Caco-2 (cell line): ENCODE measurements at regions of chr2 and their contacts with region 1.

Region 1: DNA sequence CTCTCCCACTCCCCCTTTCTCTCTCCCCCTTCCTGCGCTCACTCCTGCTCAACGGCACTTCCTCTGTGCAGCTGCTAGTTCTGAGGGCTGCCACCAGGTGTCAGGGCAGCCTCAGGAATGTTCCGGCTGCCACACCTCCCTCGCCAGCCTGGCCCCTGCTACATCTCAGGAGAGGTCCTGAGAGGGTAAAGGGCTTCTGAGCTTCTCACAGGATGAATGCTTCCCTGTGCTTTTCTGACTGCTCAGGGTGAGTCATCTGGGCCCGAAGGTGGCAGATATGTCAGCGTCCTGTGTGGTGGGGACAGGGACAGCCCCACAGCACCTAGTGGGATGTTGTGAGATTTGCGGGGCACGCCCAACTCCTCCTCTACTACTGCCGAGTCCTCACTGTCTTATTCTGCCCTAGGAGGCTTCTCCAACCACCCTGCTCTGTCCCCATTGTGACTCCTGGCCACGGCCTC is 49.0 kb downstream of the PLEKHB2 start:
- DNase-seq: peak; percentile 78 to 81
- H3K4me3 ChIP-seq: no peak overlapping the region
- H3K4me3 Mint-ChIP-seq: no peak overlapping the region
- H3K27ac Mint-ChIP-seq: no peak overlapping the region
- H3K4me1 ChIP-seq: no peaks in the 10 kb centered on the region
- H3K4me1 Mint-ChIP-seq: peaks cover 12% of the 10 kb centered on the region
- H3K27me3 ChIP-seq: no peaks in the 10 kb centered on the region
- H3K27me3 Mint-ChIP-seq: no peaks in the 10 kb centered on the region
- CTCF ChIP-seq: peak; percentile 91 to 93

Region 2: GRCh38 chr2:131413148-131413747 is 259.1 kb after region 1 on chr2:
- CTCF ChIA-PET with region 1: interaction called, 3 read pairs
- POLR2A ChIA-PET with region 1: no interaction called
- intact Hi-C with region 1: loop called (anchors 1 kb)
- DNase-seq: peak in 1 of 2 experiments; percentile 67
- H3K4me3 ChIP-seq: no peak overlapping the region
- H3K4me3 Mint-ChIP-seq: no peak overlapping the region
- H3K27ac Mint-ChIP-seq: no peak overlapping the region
- H3K4me1 ChIP-seq: no peaks in the 10 kb centered on the region
- H3K4me1 Mint-ChIP-seq: no peaks in the 10 kb centered on the region
- H3K27me3 ChIP-seq: no peaks in the 10 kb centered on the region
- H3K27me3 Mint-ChIP-seq: peaks cover 18% of the 10 kb centered on the region
- CTCF ChIP-seq: peak; percentile 71 to 82

Region 3: GRCh38 chr2:131492418-131493198 is 338.5 kb after region 1 on chr2:
- CTCF ChIA-PET with region 1: interaction called, 5 read pairs
- POLR2A ChIA-PET with region 1: no interaction called
- intact Hi-C with region 1: loop called (anchors 5 kb)
- DNase-seq: peak; percentile 97 to 98
- H3K4me3 ChIP-seq: peak overlapping the region; percentile 96
- H3K4me3 Mint-ChIP-seq: peak overlapping the region; percentile 95
- H3K27ac Mint-ChIP-seq: peak overlapping the region; percentile 98
- H3K4me1 ChIP-seq: no peaks in the 10 kb centered on the region
- H3K4me1 Mint-ChIP-seq: no peaks in the 10 kb centered on the region
- H3K27me3 ChIP-seq: no peaks in the 10 kb centered on the region
- H3K27me3 Mint-ChIP-seq: no peaks in the 10 kb centered on the region
- CTCF ChIP-seq: peak; percentile 90 to 91

Region 4: GRCh38 chr2:131521961-131522794 is 368.1 kb after region 1 on chr2:
- CTCF ChIA-PET with region 1: no interaction called
- POLR2A ChIA-PET with region 1: no interaction called
- intact Hi-C with region 1: loop called (anchors 10 kb)
- DNase-seq: no peak
- H3K4me3 ChIP-seq: no peak overlapping the region
- H3K4me3 Mint-ChIP-seq: no peak overlapping the region
- H3K27ac Mint-ChIP-seq: no peak overlapping the region
- H3K4me1 ChIP-seq: no peaks in the 10 kb centered on the region
- H3K4me1 Mint-ChIP-seq: no peaks in the 10 kb centered on the region
- H3K27me3 ChIP-seq: no peaks in the 10 kb centered on the region
- H3K27me3 Mint-ChIP-seq: no peaks in the 10 kb centered on the region
- CTCF ChIP-seq: no peak

Region 5: DNA sequence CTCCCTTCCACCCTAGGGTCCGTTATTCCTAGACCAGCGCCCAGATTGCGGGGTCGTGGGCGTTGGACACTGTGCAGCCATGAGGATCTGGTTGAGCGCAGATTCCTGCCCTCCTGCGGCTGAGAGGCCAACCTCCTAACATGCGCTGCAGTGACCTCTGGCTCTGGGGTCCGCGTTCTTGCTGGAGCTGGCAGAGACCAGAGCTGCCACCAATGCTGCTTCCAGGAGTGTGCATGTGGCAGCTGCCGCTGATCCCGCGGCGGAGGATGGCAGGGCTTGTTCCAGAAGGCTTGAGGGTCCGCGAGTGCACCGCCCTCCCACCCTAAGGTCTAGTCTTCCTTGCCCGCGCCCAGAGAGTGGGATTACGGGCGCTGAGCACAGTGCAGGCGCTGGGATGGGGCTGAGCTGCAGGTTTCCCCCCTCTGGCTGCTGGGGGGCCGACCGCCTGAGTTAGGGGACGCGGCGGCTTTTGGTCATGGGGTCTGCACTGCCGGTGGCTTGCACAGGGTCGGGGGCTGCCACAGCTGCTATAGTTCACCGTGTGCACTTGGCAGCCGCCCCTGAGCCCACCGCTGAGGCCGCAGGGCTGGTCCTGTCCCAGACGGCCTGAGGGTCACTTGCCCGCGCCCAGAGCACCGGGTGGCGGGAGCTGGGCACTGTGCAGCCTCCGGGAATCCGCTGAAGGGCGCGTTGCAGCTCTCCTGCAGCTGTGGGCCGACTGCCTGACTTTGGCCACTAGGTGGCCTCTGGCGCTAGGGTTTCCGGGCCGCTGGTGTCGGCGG is 519.5 kb after region 1 on chr2:
- CTCF ChIA-PET with region 1: interaction called, 29 read pairs
- POLR2A ChIA-PET with region 1: no interaction called
- intact Hi-C with region 1: no loop called
- DNase-seq: peak; percentile 81 to 84
- H3K4me3 ChIP-seq: peak overlapping the region; percentile 39
- H3K4me3 Mint-ChIP-seq: peak overlapping the region; percentile 59
- H3K27ac Mint-ChIP-seq: no peak overlapping the region
- H3K4me1 ChIP-seq: no peaks in the 10 kb centered on the region
- H3K4me1 Mint-ChIP-seq: no peaks in the 10 kb centered on the region
- H3K27me3 ChIP-seq: no peaks in the 10 kb centered on the region; the same call in 1 of the 2 replicates
- H3K27me3 Mint-ChIP-seq: peaks cover 10% of the 10 kb centered on the region
- CTCF ChIP-seq: peak; percentile 87 to 91